ENCODE measurements at regions of chr11 and their contacts with region 1.

Region 1: DNA sequence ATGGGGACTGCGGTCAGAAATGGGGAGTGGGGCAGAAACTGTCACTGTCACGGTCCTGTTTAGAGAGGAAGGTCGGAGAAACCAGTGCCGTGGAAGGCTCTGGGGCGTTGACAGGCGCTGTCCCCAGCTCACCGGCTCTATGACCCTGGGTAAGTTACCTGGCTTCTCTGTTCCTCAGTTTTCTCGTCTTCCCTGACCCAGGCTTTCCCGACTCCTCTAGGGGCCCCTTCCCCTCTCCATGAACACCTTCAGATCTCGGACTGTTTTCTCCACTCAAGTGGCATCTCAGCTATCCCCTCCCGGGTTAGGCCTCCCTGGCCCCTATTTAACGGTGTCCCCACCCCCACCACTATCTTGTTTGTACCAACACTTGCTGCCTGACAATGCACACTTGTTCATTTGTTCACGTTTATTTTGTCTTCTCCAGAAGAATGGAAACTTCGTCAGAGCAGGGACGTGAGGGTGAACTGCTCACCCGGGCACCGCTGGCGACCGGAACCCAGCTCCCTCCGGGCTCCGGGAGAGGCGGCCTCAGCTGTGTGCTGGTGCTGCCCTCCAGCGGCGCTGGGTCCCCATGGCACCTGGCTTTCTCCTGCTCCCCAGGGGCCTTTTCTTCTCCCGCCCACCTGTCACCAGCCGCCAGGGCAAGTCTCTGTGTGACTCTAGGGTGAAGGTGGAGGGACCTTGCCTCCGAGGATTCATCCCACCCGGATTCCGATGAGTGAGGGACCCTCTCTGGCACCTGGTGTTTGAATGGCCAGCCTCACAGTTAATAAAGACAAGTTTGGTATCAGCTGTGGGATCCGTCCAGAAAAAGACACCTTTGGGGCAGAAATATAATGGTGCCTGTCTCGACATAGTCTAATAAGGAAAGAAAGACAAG is 33.1 kb upstream of the SLC35C1 start:
- DNase-seq: peak; percentile 74 to 96
- ATAC-seq: peak; percentile 95 to 98
- H3K4me3 ChIP-seq: peak overlapping the region; percentile 52
- H3K27ac ChIP-seq: peak overlapping the region; percentile 8 to 36; a peak in 1 of 6 replicates
- H3K4me1 ChIP-seq: no peaks in the 10 kb centered on the region
- CTCF ChIP-seq: peak; percentile 87
- EP300 ChIP-seq: no peak
- POLR2A ChIP-seq: no peak
- RAD21 ChIP-seq: peak; percentile 89 to 95

Region 2: GRCh38 chr11:44530413-44531115 is 1241.2 kb before region 1 on chr11:
- CTCF ChIA-PET with region 1: no interaction called
- POLR2A ChIA-PET with region 1: no interaction called
- DNase-seq: no peak
- ATAC-seq: peak in 1 of 2 experiments; percentile 61; a peak in 3 of 6 replicates
- H3K4me3 ChIP-seq: no peak overlapping the region
- H3K27ac ChIP-seq: peak overlapping the region in 1 of 2 experiments; percentile 43; a peak in 2 of 6 replicates
- H3K4me1 ChIP-seq: peaks cover 17% of the 10 kb centered on the region; the same call in 2 of the 3 replicates
- CTCF ChIP-seq: no peak
- EP300 ChIP-seq: no peak
- POLR2A ChIP-seq: no peak
- RAD21 ChIP-seq: no peak

Region 3: GRCh38 chr11:45339729-45340519 is 431.9 kb before region 1 on chr11:
- CTCF ChIA-PET with region 1: interaction called, 114 read pairs
- POLR2A ChIA-PET with region 1: no interaction called
- DNase-seq: peak; percentile 91 to 95
- ATAC-seq: peak; percentile 90 to 99
- H3K4me3 ChIP-seq: peak overlapping the region; percentile 32
- H3K27ac ChIP-seq: no peak overlapping the region
- H3K4me1 ChIP-seq: no peaks in the 10 kb centered on the region
- CTCF ChIP-seq: peak; percentile 81
- EP300 ChIP-seq: no peak
- POLR2A ChIP-seq: no peak
- RAD21 ChIP-seq: peak; percentile 64 to 66

Region 4: GRCh38 chr11:45400591-45400990 is 371.2 kb before region 1 on chr11:
- CTCF ChIA-PET with region 1: interaction called, 18 read pairs
- POLR2A ChIA-PET with region 1: no interaction called
- DNase-seq: no peak
- ATAC-seq: no peak
- H3K4me3 ChIP-seq: no peak overlapping the region
- H3K27ac ChIP-seq: no peak overlapping the region
- H3K4me1 ChIP-seq: peaks cover 5% of the 10 kb centered on the region; the same call in 1 of the 3 replicates
- CTCF ChIP-seq: no peak
- EP300 ChIP-seq: no peak
- POLR2A ChIP-seq: no peak
- RAD21 ChIP-seq: no peak

Region 5: GRCh38 chr11:45572354-45573123 is 199.3 kb before region 1 on chr11:
- CTCF ChIA-PET with region 1: interaction called, 10 read pairs
- POLR2A ChIA-PET with region 1: no interaction called
- DNase-seq: no peak
- ATAC-seq: no peak
- H3K4me3 ChIP-seq: no peak overlapping the region
- H3K27ac ChIP-seq: no peak overlapping the region
- H3K4me1 ChIP-seq: no peaks in the 10 kb centered on the region
- CTCF ChIP-seq: no peak
- EP300 ChIP-seq: no peak
- POLR2A ChIP-seq: no peak
- RAD21 ChIP-seq: no peak

Region 6: DNA sequence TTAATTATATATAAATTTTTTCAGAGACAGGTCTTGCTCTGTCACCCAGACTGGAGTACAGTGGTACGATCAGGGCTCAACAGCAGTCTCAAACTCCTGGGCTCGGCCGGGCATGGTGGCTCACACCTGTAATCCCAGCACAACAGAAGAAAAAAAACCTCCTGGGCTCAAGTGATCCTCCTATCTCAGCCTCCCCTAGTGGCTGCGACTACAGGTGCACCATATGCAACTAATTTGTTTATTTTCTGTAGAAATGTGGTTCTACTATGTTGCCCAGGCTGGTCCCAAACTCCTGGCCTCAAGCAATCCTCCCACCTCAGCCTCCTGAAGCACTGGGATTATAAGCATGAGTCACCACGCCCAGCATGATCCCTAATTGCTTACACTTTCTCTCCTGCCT is 23.0 kb before region 1 on chr11:
- CTCF ChIA-PET with region 1: interaction called, 96 read pairs
- POLR2A ChIA-PET with region 1: no interaction called
- DNase-seq: no peak
- ATAC-seq: no peak; a peak in 1 of 6 replicates
- H3K4me3 ChIP-seq: no peak overlapping the region
- H3K27ac ChIP-seq: no peak overlapping the region
- H3K4me1 ChIP-seq: no peaks in the 10 kb centered on the region
- CTCF ChIP-seq: no peak
- EP300 ChIP-seq: no peak
- POLR2A ChIP-seq: no peak
- RAD21 ChIP-seq: no peak

Region 7: GRCh38 chr11:45798793-45799441 is 27.1 kb after region 1 on chr11:
- CTCF ChIA-PET with region 1: interaction called, 44 read pairs
- POLR2A ChIA-PET with region 1: no interaction called
- DNase-seq: no peak
- ATAC-seq: no peak
- H3K4me3 ChIP-seq: no peak overlapping the region
- H3K27ac ChIP-seq: no peak overlapping the region
- H3K4me1 ChIP-seq: 0 out of 3 replicates have a peak, but pooled peaks cover 4% of the 10 kb centered on the region
- CTCF ChIP-seq: no peak
- EP300 ChIP-seq: no peak
- POLR2A ChIP-seq: no peak
- RAD21 ChIP-seq: no peak

Measured in A549 (cell line).